ENCODE measurements at regions of chr17 and their contacts with region 1.

Region 1: GRCh38 chr17:52110923-52111581 is 47.5 kb downstream of the CA10 start:
- DNase-seq: no peak
- H3K4me3 ChIP-seq: no peak overlapping the region
- H3K27ac ChIP-seq: no peak overlapping the region
- H3K4me1 ChIP-seq: no peaks in the 10 kb centered on the region
- H3K27me3 ChIP-seq: no peaks in the 10 kb centered on the region
- CTCF ChIP-seq: no peak

Region 2: DNA sequence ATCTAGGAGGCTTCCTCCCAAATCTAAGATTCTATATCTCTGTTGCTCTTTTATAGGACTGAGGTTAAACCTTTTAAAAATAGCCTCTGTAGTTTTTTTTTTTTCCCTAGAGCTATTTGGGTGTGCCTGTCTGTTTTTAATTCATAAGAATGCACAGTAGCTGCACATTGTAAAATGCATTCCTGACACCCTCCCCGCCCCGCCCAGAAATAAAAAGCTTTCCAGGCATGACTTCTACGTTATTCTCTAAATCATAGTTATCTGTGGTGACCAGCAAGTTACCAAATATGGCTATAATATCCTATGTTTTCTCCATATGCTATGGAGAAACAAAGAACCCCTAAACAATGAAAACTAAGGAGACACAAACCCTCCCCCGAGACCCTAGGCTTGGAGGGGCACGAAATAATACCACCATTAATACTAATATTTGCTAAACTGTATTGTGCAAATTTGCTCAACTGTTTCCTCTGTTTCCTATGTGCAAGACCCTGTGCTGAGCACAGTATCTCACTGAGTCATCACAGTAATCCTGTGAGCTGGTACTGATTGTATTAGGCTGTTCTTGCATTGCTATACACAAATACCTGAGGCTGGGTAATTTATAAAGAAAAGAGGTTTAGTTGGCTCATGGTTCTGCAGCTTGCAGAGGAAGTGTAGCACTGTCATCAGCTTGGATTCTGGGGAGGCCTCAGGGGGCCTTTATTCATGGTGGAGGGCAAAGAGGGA is 340.9 kb before region 1 on chr17:
- dilution Hi-C with region 1: loop called (anchors 10 kb)
- DNase-seq: no peak
- H3K4me3 ChIP-seq: no peak overlapping the region
- H3K27ac ChIP-seq: no peak overlapping the region
- H3K4me1 ChIP-seq: no peaks in the 10 kb centered on the region
- H3K27me3 ChIP-seq: no peaks in the 10 kb centered on the region
- CTCF ChIP-seq: no peak

Region 3: GRCh38 chr17:51901242-51901641 is 209.8 kb before region 1 on chr17:
- dilution Hi-C with region 1: no loop called
- DNase-seq: no peak
- H3K4me3 ChIP-seq: no peak overlapping the region
- H3K27ac ChIP-seq: no peak overlapping the region
- H3K4me1 ChIP-seq: no peaks in the 10 kb centered on the region
- H3K27me3 ChIP-seq: no peaks in the 10 kb centered on the region
- CTCF ChIP-seq: no peak

Region 4: GRCh38 chr17:52170963-52171572 is 60.0 kb after region 1 on chr17:
- dilution Hi-C with region 1: no loop called
- DNase-seq: no peak
- H3K4me3 ChIP-seq: no peak overlapping the region
- H3K27ac ChIP-seq: no peak overlapping the region
- H3K4me1 ChIP-seq: no peaks in the 10 kb centered on the region
- H3K27me3 ChIP-seq: no peaks in the 10 kb centered on the region
- CTCF ChIP-seq: peak; percentile 81 to 86 (median 85)

Measured in keratinocyte (primary cell).